Esophagus muscularis mucosa (tissue), 4 donors: ENCODE measurements at regions of chr16 and their contacts with region 1.

Region 1: DNA sequence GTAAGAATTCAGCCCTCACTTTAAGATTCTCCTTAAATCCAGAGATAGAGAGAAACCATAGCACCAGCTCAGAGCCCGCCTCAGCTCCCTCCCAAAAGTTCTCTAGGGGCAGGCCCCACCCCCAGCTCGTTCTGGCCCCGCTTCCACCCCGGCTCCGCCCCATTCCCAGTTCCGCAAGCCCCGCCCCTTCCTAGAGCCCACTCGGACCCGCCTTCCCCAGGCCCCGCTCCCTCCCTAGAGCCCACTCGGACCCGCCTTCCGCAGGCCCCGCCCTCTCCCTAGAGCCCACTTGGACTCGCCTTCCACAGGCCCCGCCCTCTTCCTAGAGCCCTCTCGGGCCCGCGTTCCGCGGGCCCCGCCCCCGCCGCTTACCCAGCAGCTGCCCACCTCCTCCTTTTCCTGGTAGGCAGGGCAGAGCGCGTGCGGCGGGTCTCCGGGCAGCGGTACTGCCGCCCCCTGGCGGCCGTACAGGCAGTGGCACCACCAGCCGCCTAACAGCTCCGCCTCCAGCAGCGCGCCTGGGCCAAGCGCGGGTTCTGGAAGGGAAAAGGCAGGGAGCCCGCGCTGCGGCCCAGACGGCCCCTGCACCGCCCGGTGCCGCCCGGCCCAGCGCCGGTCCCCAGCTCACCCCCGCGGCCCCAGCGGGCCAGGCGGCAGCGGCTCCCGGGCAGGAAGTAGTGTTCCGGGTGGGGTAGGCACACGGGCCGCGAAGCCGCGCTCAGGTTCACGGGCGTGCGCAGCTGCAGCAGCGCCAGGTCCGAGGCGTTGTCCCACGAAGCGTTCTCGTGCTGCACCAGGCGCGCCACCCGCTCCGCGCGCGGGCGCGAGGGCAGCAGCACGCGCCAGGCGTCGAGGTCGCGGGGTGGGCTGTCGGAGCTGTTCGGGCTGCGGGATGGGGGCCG is 6.8 kb upstream of the PRSS8 start:
- DNase-seq: peak; percentile 100
- H3K4me3 ChIP-seq: peak overlapping the region; percentile 56 to 72 (median 62)
- H3K27ac ChIP-seq: peak overlapping the region; percentile 79 to 86 (median 82)
- H3K4me1 ChIP-seq: peaks cover 18 to 27% (median 23%) of the 10 kb centered on the region in 4 donors
- H3K27me3 ChIP-seq: peaks cover 0 to 5% (median 0%) of the 10 kb centered on the region in 4 donors
- CTCF ChIP-seq: peak in 2 of 3 experiments; percentile 99 to 100
- EP300 ChIP-seq: no peak
- POLR2A ChIP-seq: no peak

Region 2: GRCh38 chr16:31108035-31108793 is 34.1 kb before region 1 on chr16 and contains the start of gene BCKDK:
- intact Hi-C with region 1: loop called (anchors 5 kb)
- DNase-seq: no peak
- H3K4me3 ChIP-seq: peak within 1 kb of the TSS; percentile 89 to 98 (median 91)
- H3K27ac ChIP-seq: peak within 1 kb of the TSS; percentile 88 to 93 (median 91)
- H3K4me1 ChIP-seq: peaks cover 29 to 37% (median 35%) of the 10 kb centered on the region in 4 donors
- H3K27me3 ChIP-seq: no peaks in the 10 kb centered on the region
- CTCF ChIP-seq: no peak
- EP300 ChIP-seq: no peak
- POLR2A ChIP-seq: peak; percentile 63
- total RNA-seq, gene BCKDK: 34.1 to 73.7 (median 51.4) TPM

Region 3: DNA sequence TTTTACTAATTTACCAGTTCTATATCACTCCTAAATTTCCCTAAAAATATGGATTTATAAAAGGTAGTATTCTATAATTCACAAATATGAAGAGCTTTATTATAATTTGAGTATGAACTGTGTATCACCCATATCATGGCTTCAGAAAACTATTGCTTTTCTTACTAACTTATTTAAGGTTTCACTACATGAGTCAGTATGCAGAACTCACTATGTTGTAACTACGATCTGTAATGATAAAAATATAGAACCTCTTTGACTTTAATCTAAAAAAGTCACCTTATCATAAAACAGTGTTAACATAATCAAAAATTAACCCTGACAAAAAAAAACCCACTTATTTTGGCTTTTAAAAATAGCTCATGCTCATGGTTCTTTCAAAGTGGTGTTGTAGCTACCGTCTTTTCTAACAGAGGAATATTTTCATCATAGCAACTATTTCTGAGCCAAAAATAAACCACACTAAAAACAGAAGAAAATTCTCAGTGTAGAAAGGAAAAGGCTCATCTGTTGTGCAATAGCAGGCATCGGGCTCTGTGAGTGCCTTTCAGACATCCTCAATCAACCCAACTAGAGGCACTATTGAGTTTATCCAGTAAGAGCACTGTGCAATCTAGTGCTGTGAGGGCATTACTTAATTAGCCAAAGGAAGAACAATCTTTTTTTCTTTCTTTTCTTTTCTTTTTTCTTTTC is 159.5 kb after region 1 on chr16:
- intact Hi-C with region 1: no loop called
- DNase-seq: no peak
- H3K4me3 ChIP-seq: no peak overlapping the region
- H3K27ac ChIP-seq: no peak overlapping the region
- H3K4me1 ChIP-seq: peaks cover 0 to 11% (median 7%) of the 10 kb centered on the region in 4 donors
- H3K27me3 ChIP-seq: peaks cover 0 to 4% (median 0%) of the 10 kb centered on the region in 4 donors
- CTCF ChIP-seq: no peak
- EP300 ChIP-seq: no peak
- POLR2A ChIP-seq: no peak